ENCODE measurements at regions of chr14 and their contacts with region 1.

Region 1: DNA sequence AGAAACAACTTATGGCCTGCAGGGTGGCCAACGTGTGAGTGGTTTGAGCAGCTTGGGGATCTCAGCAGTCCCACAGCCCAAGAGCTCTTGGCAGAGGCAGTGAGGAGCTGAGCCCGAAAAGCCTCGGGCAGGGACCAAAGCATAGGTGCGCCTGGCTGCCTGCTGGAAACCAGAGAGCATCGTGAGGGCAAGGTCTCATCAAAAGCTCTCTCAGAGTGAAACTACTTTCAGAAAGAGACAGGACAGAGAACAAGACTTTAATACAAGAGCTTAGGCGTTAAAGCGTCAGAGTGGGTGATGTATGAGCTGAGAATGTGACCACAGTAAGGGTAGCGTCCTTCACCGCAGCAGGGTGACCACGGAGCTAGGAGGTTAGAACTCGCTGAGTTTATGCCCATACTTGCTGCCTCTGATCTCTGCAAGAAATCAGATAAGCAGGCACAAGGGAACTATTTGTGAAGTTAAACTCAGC is 30.8 kb downstream of the LGMN start:
- DNase-seq: no peak
- H3K4me3 ChIP-seq: no peak overlapping the region
- H3K27ac ChIP-seq: peak overlapping the region in 1 of 2 donors; percentile 5
- H3K4me1 ChIP-seq: peaks cover 9 to 14% of the 10 kb centered on the region in 2 donors
- H3K27me3 ChIP-seq: no peaks in the 10 kb centered on the region
- CTCF ChIP-seq: no peak

Region 2: DNA sequence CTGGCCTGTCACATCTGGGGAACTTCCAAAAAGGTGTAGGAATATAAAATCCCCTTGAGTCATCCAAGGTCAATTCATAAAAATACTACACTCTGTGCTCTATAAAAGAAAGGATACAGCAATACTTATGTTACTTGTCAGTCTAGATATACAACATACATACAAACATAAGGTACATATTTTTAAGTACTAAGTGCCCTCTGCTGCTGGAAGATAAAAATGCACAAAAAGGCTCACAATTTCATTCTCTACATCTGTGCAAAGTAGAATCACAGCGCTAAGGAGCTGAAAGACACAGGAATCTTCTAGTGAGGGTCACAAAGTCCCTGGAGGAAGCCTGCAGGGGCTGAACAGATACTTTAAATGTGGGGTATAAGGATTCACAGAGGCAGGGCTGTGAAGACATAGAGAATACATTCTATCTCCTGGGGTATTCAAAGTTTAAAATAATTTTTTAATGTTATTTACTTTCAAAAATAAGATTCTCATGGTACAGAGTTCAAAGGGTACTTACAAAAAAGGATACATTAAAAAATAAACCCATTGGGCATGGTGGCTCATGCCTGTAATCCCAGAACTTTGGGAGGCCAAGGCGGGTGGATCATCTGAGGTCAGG is 66.3 kb after region 1 on chr14:
- intact Hi-C with region 1: loop called (anchors 1 kb)
- DNase-seq: no peak
- H3K4me3 ChIP-seq: no peak overlapping the region
- H3K27ac ChIP-seq: no peak overlapping the region
- H3K4me1 ChIP-seq: peaks cover 0 to 2% of the 10 kb centered on the region in 2 donors
- H3K27me3 ChIP-seq: no peaks in the 10 kb centered on the region
- CTCF ChIP-seq: peak; percentile 36 to 66 (median 53)

Measured in ascending aorta (tissue), 2 donors.